Activated naive CD4-positive, alpha-beta T cell treated with anti-CD3 and anti-CD28 coated beads, Interleukin-2, amount 10 ng/mL, durations not matched to agents 7 days and 5 days (primary cell): ENCODE measurements at regions of chr3 and their contacts with region 1.

Region 1: GRCh38 chr3:13884851-13885703 is 5.2 kb upstream of the WNT7A start:
- DNase-seq: peak; percentile 84
- H3K4me3 Mint-ChIP-seq: no peak overlapping the region
- H3K27ac Mint-ChIP-seq: no peak overlapping the region
- H3K4me1 Mint-ChIP-seq: peaks cover 13% of the 10 kb centered on the region
- H3K27me3 Mint-ChIP-seq: peaks cover 66% of the 10 kb centered on the region

Region 2: DNA sequence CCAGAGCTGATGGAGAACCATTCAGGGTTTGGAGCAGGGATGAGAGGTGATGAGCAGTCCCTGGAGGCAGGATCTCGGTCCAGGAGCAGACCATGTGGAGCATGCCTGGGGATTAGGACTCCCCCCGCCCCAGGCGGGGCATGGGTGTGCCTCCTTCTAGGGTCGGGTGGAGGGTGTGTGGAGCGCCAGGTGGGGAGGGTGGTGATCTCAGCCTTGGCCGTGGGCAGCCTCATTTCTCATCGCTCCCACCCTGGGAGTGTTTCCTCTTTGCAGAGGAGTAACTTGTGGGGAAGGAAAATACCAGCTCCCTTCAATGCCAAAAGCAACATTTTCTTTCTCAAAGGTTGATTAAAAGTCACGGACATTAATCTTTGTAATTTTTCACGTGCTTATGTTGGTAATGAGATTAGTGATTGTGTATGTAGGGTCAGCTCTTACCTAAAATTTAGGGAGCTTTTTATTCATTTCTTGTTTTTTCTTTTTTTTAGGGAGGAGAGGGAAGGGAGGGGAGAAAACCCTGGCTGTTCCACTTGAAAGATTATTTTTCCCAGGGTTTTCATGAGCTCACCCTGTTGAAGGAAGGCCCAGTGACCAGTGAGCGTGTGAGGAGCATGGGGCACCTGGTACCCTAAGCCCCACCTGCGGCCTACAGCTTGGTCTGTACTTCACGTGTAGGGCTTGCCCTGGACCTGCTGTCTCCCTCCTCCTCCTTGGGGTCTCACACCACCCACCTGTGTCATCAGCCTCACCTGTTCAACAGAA is 325.1 kb before region 1 on chr3:
- CTCF ChIA-PET with region 1: no interaction called
- DNase-seq: no peak
- H3K4me3 Mint-ChIP-seq: no peak overlapping the region
- H3K27ac Mint-ChIP-seq: no peak overlapping the region
- H3K4me1 Mint-ChIP-seq: no peaks in the 10 kb centered on the region
- H3K27me3 Mint-ChIP-seq: peaks cover 56% of the 10 kb centered on the region

Region 3: GRCh38 chr3:13866041-13866965 is 18.8 kb before region 1 on chr3:
- CTCF ChIA-PET with region 1: interaction called, 13 read pairs
- DNase-seq: peak; percentile 83
- H3K4me3 Mint-ChIP-seq: peak overlapping the region; percentile 31
- H3K27ac Mint-ChIP-seq: peak overlapping the region; percentile 96
- H3K4me1 Mint-ChIP-seq: peaks cover 57% of the 10 kb centered on the region
- H3K27me3 Mint-ChIP-seq: peaks cover 36% of the 10 kb centered on the region